Endothelial cell of umbilical vein (primary cell): ENCODE measurements at regions of chr1 and their contacts with region 1.

Region 1: DNA sequence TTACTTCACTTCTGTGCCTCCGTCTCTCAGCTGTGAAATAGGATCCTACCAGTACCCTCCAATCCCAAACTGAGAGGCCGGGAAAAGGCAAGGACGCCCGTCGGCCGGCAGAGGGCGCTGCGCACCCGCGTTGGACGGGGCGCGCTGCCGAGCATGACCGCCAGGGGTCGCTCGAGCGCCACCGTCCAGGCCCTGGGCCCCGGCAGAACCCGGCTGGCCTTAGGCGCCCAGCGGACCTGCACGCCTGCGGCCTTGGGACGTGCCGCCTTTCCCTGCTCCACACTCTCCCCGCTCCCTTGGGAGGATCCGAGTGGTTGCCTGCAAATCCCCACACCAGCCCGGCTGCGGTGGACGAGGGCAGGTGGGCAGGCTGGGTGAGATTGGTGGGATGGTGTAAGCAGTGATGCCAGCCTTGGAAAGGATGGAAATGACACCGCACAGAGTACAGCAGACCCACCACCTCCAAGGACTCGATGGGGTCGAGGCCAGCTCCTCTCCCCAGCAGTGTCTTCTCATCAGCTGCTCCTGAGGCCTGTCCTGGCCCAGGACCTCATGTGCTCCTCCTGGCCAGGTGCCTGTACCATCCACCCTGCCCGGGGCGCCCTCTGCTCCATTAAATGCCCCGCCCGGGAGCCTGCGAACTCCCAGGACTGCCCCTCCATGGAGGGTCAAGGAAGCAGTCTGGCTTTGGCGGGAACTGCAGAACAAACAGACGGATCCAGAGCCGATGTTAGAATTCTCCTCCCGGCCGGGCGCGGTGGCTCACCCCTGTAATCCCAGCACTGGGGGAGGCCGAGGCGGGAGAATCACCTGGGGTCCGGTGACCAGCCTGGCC is 47.4 kb upstream of the LBR start:
- DNase-seq: peak; percentile 74
- H3K4me3 ChIP-seq: no peak overlapping the region
- H3K27ac ChIP-seq: no peak overlapping the region
- H3K4me1 ChIP-seq: no peaks in the 10 kb centered on the region
- H3K27me3 ChIP-seq: no peaks in the 10 kb centered on the region
- CTCF ChIP-seq: peak; percentile 99 to 100
- POLR2A ChIP-seq: no peak

Region 2: DNA sequence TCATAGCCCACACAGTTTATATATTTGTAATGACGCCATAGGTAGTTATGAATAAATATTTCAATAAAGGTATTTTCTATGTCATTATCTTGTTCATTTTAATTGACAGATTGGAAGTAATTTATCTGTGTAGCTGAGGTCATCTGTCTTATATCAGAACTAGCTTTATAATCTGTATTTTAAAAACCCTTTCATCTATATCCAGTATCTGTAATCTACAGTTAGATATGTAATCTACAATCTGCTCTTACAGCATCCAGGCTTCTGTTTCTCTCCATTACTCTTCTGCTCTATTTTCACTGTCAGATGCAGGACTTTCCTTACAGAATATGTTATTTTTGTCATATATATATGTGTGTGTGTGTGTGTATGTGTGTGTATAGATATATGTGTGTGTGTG is 185.0 kb before region 1 on chr1:
- CTCF ChIA-PET with region 1: no interaction called
- POLR2A ChIA-PET with region 1: no interaction called
- dilution Hi-C with region 1: no loop called
- intact Hi-C with region 1: no loop called
- DNase-seq: no peak
- H3K4me3 ChIP-seq: no peak overlapping the region
- H3K27ac ChIP-seq: no peak overlapping the region
- H3K4me1 ChIP-seq: no peaks in the 10 kb centered on the region
- H3K27me3 ChIP-seq: no peaks in the 10 kb centered on the region
- CTCF ChIP-seq: no peak
- POLR2A ChIP-seq: no peak

Region 3: GRCh38 chr1:225554216-225554812 is 79.1 kb after region 1 on chr1:
- CTCF ChIA-PET with region 1: no interaction called
- POLR2A ChIA-PET with region 1: no interaction called
- dilution Hi-C with region 1: no loop called
- intact Hi-C with region 1: loop called (anchors 5 kb)
- DNase-seq: peak; percentile 57
- H3K4me3 ChIP-seq: no peak overlapping the region
- H3K27ac ChIP-seq: no peak overlapping the region
- H3K4me1 ChIP-seq: no peaks in the 10 kb centered on the region
- H3K27me3 ChIP-seq: no peaks in the 10 kb centered on the region
- CTCF ChIP-seq: peak; percentile 30 to 32
- POLR2A ChIP-seq: no peak

Region 4: GRCh38 chr1:225777583-225778336 is 302.6 kb after region 1 on chr1 and contains the start of gene SRP9:
- CTCF ChIA-PET with region 1: interaction called, 81 read pairs
- POLR2A ChIA-PET with region 1: interaction called, 3 read pairs
- dilution Hi-C with region 1: no loop called
- intact Hi-C with region 1: loop called (anchors 1 kb)
- DNase-seq: peak; percentile 99
- H3K4me3 ChIP-seq: peak within 1 kb of the TSS; percentile 68 to 100 (median 83)
- H3K27ac ChIP-seq: peak within 1 kb of the TSS; percentile 95
- H3K4me1 ChIP-seq: peaks cover 23% of the 10 kb centered on the region
- H3K27me3 ChIP-seq: no peaks in the 10 kb centered on the region
- CTCF ChIP-seq: peak; percentile 94 to 98
- POLR2A ChIP-seq: peak; percentile 85
- total RNA-seq, gene SRP9: 283 and 292 TPM in 2 replicates

Region 5: GRCh38 chr1:225881969-225882693 is 406.9 kb after region 1 on chr1 and contains the start of gene TMEM63A:
- CTCF ChIA-PET with region 1: interaction called, 14 read pairs
- POLR2A ChIA-PET with region 1: no interaction called
- dilution Hi-C with region 1: no loop called
- intact Hi-C with region 1: loop called (anchors 1 kb)
- DNase-seq: peak; percentile 86
- H3K4me3 ChIP-seq: peak within 1 kb of the TSS; percentile 70 to 91 (median 81)
- H3K27ac ChIP-seq: peak within 1 kb of the TSS; percentile 38
- H3K4me1 ChIP-seq: peaks cover 14% of the 10 kb centered on the region
- H3K27me3 ChIP-seq: no peaks in the 10 kb centered on the region
- CTCF ChIP-seq: peak; percentile 16 to 37
- POLR2A ChIP-seq: no peak
- total RNA-seq, gene TMEM63A: 40.8 and 41.4 TPM in 2 replicates

Region 6: DNA sequence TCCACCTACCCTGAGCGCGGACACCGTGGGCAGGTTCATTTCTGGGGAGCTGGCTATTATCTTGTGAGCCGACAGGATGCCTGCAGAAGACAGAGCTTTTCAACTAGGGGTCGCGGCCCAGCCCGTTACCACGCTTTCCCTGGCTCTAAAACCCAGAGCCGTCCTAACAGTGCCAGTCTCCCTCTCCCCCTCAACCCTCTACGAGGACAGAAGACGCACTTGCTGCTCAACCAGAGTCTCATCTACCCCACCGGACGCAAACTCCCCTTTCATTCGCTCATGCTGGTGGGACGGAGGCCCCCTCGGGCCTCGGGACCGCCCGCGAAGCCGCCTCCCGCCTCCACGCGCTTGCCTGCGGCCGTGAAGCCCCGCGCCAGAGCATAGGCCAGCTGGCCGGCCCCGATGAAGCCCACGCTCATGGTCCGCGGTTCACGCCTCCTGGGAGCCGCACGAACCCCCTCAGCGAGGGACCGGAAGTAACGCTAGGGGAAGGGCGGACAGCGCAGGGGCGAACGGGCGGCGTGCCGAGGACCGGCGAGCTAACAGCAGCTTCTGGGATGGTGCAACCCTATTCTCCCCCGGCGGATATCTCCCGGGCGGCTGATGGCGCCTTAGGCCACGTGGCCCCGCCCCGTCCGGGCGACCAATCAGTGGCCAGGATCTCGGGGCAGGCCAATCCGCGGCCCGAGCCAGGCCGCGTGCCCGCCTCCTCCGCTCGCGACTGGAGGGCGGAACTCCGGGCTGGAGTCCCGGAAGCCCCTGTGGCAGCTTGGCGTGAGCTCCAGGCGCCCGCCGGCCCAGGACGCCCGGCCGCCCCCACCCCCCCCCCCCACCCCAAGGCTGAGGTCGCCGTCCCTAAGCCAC is 448.7 kb after region 1 on chr1 and contains the start of gene PYCR2:
- CTCF ChIA-PET with region 1: interaction called, 12 read pairs
- POLR2A ChIA-PET with region 1: no interaction called
- dilution Hi-C with region 1: no loop called
- intact Hi-C with region 1: no loop called
- DNase-seq: peak; percentile 97
- H3K4me3 ChIP-seq: peak within 1 kb of the TSS; percentile 15 to 69 (median 59)
- H3K27ac ChIP-seq: peak within 1 kb of the TSS; percentile 69
- H3K4me1 ChIP-seq: peaks cover 19% of the 10 kb centered on the region
- H3K27me3 ChIP-seq: no peaks in the 10 kb centered on the region
- CTCF ChIP-seq: no peak
- POLR2A ChIP-seq: peak; percentile 94
- total RNA-seq, gene PYCR2: 60.4 and 64.6 TPM in 2 replicates